Activated CD4-positive, alpha-beta T cell treated with anti-CD3 and anti-CD28 coated beads, Interleukin-2, amount 10 ng/mL, durations not matched to agents 24 days and 14 days (primary cell): ENCODE measurements at regions of chr6 and their contacts with region 1.

Region 1: GRCh38 chr6:3068329-3069214 is at the start of gene RIPK1:
- DNase-seq: peak; percentile 99
- H3K4me3 Mint-ChIP-seq: peak within 1 kb of the TSS; percentile 98
- H3K27ac Mint-ChIP-seq: peak within 1 kb of the TSS; percentile 97
- H3K4me1 Mint-ChIP-seq: peaks cover 47% of the 10 kb centered on the region
- H3K27me3 Mint-ChIP-seq: no peaks in the 10 kb centered on the region
- total RNA-seq, gene RIPK1: 17.0 and 17.9 TPM in 2 replicates

Region 2: DNA sequence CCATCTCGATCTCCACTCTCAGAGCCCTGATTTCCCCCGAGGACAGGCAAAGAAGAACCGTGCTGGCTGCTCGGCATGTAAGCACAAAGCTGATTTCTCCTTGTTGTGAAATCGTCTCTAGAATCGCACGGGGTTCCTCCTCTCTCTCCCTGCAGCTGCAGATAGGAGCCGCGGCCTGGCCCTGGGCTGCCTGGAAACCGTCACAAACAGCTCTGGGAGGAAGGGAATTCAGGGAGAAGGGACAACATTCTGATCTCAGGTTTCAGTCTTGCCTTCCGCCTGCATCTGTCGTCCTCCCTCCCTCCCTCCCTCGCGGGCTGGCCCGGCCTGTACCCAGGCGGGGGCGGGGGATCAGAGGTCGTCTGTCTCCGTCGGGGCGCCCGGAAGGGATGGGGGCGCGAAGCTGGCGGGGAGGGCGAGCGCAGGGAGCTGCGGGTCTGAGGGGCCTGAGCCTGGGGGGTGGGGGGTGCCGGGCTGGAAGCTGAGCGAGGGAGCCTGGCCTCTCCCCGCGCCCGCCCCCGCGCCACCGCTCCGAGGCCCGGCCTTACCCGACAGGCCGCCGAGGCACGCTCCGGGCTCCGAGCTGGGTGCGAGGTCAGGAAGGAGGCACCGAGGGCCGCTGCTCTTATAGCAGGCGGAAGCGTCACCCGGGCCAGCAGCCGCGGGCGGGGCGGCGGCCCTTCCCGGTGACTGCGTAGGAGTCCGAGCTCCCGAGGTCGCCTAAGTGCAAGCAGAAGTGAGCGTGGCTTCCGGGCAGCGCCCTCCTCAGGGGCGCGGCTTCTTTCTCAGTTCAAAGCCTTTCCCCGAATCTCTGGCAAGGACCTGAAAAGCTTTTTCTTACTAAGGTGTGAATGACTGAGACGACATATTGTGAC is 227.1 kb before region 1 on chr6 and contains the start of gene SERPINB1:
- intact Hi-C with region 1: loop called (anchors 5 kb)
- DNase-seq: peak; percentile 94
- H3K4me3 Mint-ChIP-seq: peak within 1 kb of the TSS; percentile 91
- H3K27ac Mint-ChIP-seq: peak within 1 kb of the TSS; percentile 88
- H3K4me1 Mint-ChIP-seq: peaks cover 57% of the 10 kb centered on the region
- H3K27me3 Mint-ChIP-seq: no peaks in the 10 kb centered on the region
- total RNA-seq, gene SERPINB1: 76.1 and 79.9 TPM in 2 replicates